Activated CD4-positive, alpha-beta T cell treated with anti-CD3 and anti-CD28 coated beads, Interleukin-2, amount 10 ng/mL, durations not matched to agents 7 days and 5 days (primary cell): ENCODE measurements at regions of chr3 and their contacts with region 1.

Region 1: DNA sequence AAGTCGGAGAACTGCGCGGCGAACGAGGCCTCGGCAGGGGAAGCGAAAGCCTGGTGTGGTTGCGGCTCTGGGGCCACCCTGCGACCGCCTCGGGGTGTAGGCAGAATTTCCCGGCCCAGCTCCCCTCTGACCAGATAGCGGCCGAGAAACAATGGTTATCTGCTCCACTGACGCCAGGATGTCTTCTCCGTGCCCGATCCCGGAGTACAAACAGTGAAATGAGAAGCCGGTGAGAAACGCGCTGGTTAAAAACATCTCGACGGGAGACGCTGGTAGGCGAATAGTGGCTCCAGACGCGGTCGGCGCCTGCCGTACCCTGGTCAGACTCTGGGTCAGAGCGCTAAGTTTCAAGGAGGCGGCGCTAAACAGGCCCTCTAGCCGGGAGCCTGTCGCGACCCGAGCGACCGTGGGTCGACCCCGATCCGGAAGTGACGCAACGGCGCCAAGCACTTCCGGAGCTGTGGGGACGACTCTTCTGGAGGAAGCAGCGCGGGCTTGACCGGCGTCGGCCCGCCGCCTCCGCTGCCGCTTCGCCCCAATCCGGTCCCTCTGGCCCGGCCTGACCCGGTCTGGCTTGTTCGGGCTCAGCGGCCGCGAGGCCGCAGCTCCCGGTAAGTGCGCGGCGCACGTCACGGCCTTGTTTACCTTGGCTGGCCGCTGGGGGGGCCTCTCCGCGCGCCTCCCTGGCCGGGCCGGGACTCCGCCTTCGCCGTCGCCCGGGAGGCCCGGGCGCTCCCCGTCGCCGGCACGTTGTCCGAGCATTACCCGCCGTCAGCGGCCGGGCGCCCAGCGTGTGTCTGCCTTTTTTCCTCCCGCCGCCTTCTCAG is at the start of gene ARIH2:
- DNase-seq: peak; percentile 89
- H3K4me3 Mint-ChIP-seq: peak within 1 kb of the TSS; percentile 90
- H3K27ac Mint-ChIP-seq: peak within 1 kb of the TSS; percentile 100
- H3K4me1 Mint-ChIP-seq: peaks cover 27% of the 10 kb centered on the region
- H3K27me3 Mint-ChIP-seq: no peaks in the 10 kb centered on the region
- total RNA-seq, gene ARIH2: 91.0 to 95.0 TPM

Region 2: GRCh38 chr3:48898383-48899234 is 20.0 kb before region 1 on chr3 and contains the start of gene SLC25A20:
- CTCF ChIA-PET with region 1: interaction called, 11 read pairs
- POLR2A ChIA-PET with region 1: interaction called, 4 read pairs
- DNase-seq: peak; percentile 94
- H3K4me3 Mint-ChIP-seq: peak within 1 kb of the TSS; percentile 97
- H3K27ac Mint-ChIP-seq: peak within 1 kb of the TSS; percentile 97
- H3K4me1 Mint-ChIP-seq: peaks cover 55% of the 10 kb centered on the region
- H3K27me3 Mint-ChIP-seq: no peaks in the 10 kb centered on the region
- total RNA-seq, gene SLC25A20: 35.2 to 40.6 TPM

Region 3: DNA sequence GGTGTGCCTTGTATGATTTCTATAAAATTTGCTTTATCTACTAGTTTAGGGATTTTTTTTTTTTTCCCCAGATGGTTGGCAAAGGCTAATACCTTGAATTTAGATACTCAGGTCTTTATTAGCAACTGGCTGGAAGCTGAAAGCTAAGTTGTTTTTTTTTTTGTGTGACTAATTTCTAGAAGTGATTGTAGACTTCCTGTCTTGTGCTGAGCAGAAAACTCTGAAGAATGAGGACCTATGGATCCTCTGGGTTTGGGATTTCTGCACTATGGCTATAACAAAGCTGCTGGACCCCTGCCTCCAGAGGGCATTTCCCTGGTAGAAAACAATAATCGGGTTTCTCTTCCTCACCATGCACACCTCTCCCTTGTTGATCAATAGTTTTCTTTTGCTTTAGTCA is 10.1 kb after region 1 on chr3:
- CTCF ChIA-PET with region 1: interaction called, 10 read pairs
- POLR2A ChIA-PET with region 1: interaction called, 4 read pairs
- DNase-seq: no peak
- H3K4me3 Mint-ChIP-seq: peak overlapping the region; percentile 4
- H3K27ac Mint-ChIP-seq: peak overlapping the region; percentile 74
- H3K4me1 Mint-ChIP-seq: peaks cover 63% of the 10 kb centered on the region
- H3K27me3 Mint-ChIP-seq: no peaks in the 10 kb centered on the region

Region 4: GRCh38 chr3:49015072-49015471 is 96.5 kb after region 1 on chr3:
- CTCF ChIA-PET with region 1: no interaction called
- POLR2A ChIA-PET with region 1: no interaction called
- DNase-seq: no peak
- H3K4me3 Mint-ChIP-seq: no peak overlapping the region
- H3K27ac Mint-ChIP-seq: no peak overlapping the region
- H3K4me1 Mint-ChIP-seq: peaks cover 32% of the 10 kb centered on the region
- H3K27me3 Mint-ChIP-seq: no peaks in the 10 kb centered on the region

Region 5: DNA sequence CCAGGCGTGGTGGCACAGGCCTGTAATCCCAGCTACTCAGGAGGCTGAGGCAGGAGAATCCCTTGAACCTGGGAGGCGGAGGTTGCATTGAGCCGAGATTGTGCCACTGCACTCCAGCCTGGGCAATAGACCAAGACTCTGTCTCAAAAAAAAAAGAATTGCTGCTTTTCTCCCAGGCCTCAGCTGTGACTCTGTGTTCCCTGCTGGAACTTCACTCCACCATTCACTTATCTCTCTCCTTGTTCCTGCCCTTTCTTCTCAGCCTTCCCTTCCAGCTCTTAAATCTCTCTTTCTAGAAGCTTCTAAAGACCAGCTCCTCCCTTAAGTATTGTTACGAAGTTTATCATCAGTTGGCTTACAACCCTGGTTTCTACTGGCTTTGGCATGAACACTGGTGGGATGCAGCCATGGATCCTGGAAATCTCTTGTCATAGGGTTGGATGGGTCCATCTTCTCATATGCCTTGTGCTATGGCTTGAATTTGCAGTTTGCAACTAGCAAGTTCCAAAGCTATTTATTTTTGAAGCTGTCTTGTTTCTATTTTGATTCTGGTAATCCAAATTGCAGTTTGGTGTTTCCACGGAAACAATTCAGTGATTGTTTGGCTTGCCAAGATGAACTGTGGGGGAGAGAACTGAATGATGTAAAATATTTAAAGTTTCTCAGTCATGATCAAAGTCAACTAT is 348.0 kb after region 1 on chr3:
- CTCF ChIA-PET with region 1: no interaction called
- POLR2A ChIA-PET with region 1: no interaction called
- DNase-seq: no peak
- H3K4me3 Mint-ChIP-seq: no peak overlapping the region
- H3K27ac Mint-ChIP-seq: no peak overlapping the region
- H3K4me1 Mint-ChIP-seq: no peaks in the 10 kb centered on the region
- H3K27me3 Mint-ChIP-seq: no peaks in the 10 kb centered on the region

Region 6: GRCh38 chr3:50227390-50228183 is 1309.0 kb after region 1 on chr3:
- CTCF ChIA-PET with region 1: no interaction called
- POLR2A ChIA-PET with region 1: no interaction called
- DNase-seq: peak; percentile 93
- H3K4me3 Mint-ChIP-seq: peak overlapping the region; percentile 82
- H3K27ac Mint-ChIP-seq: peak overlapping the region; percentile 91
- H3K4me1 Mint-ChIP-seq: peaks cover 35% of the 10 kb centered on the region
- H3K27me3 Mint-ChIP-seq: peaks cover 10% of the 10 kb centered on the region